CD8-positive, alpha-beta T cell (primary cell): ENCODE measurements at regions of chr10 and their contacts with region 1.

Region 1: GRCh38 chr10:63421591-63421990 is 44.2 kb downstream of the JMJD1C start:
- DNase-seq: peak in 4 of 9 experiments; percentile 7 to 72 (median 47)
- ATAC-seq: peak; percentile 97
- H3K4me3 ChIP-seq: no peak overlapping the region
- H3K4me3 Mint-ChIP-seq: peak overlapping the region; percentile 52
- H3K27ac ChIP-seq: peak overlapping the region; percentile 52 to 54
- H3K27ac Mint-ChIP-seq: peak overlapping the region; percentile 93
- H3K4me1 ChIP-seq: peaks cover 23% of the 10 kb centered on the region
- H3K4me1 Mint-ChIP-seq: peaks cover 56% of the 10 kb centered on the region
- H3K27me3 ChIP-seq: no peaks in the 10 kb centered on the region
- H3K27me3 Mint-ChIP-seq: no peaks in the 10 kb centered on the region
- CTCF ChIP-seq: no peak

Region 2: GRCh38 chr10:63355682-63356081 is 65.9 kb before region 1 on chr10:
- CTCF ChIA-PET with region 1: no interaction called
- POLR2A ChIA-PET with region 1: no interaction called
- intact Hi-C with region 1: loop called in 1 of 2 experiments (anchors 10 kb)
- DNase-seq: no peak
- ATAC-seq: no peak
- H3K4me3 ChIP-seq: no peak overlapping the region
- H3K4me3 Mint-ChIP-seq: no peak overlapping the region
- H3K27ac ChIP-seq: no peak overlapping the region
- H3K27ac Mint-ChIP-seq: no peak overlapping the region
- H3K4me1 ChIP-seq: no peaks in the 10 kb centered on the region
- H3K4me1 Mint-ChIP-seq: peaks cover 19% of the 10 kb centered on the region
- H3K27me3 ChIP-seq: no peaks in the 10 kb centered on the region
- H3K27me3 Mint-ChIP-seq: no peaks in the 10 kb centered on the region
- CTCF ChIP-seq: no peak

Region 3: GRCh38 chr10:63434866-63435854 is 13.6 kb after region 1 on chr10:
- CTCF ChIA-PET with region 1: no interaction called
- POLR2A ChIA-PET with region 1: interaction called, 4 read pairs
- intact Hi-C with region 1: loop called in 1 of 2 experiments (anchors 2 kb)
- DNase-seq: no peak
- ATAC-seq: no peak
- H3K4me3 ChIP-seq: no peak overlapping the region
- H3K4me3 Mint-ChIP-seq: no peak overlapping the region
- H3K27ac ChIP-seq: no peak overlapping the region
- H3K27ac Mint-ChIP-seq: no peak overlapping the region
- H3K4me1 ChIP-seq: no peaks in the 10 kb centered on the region
- H3K4me1 Mint-ChIP-seq: peaks cover 26% of the 10 kb centered on the region
- H3K27me3 ChIP-seq: no peaks in the 10 kb centered on the region
- H3K27me3 Mint-ChIP-seq: no peaks in the 10 kb centered on the region
- CTCF ChIP-seq: no peak

Region 4: GRCh38 chr10:63491588-63492316 is 70.2 kb after region 1 on chr10:
- CTCF ChIA-PET with region 1: no interaction called
- POLR2A ChIA-PET with region 1: no interaction called
- intact Hi-C with region 1: no loop called
- DNase-seq: no peak
- ATAC-seq: no peak
- H3K4me3 ChIP-seq: no peak overlapping the region
- H3K4me3 Mint-ChIP-seq: no peak overlapping the region
- H3K27ac ChIP-seq: no peak overlapping the region
- H3K27ac Mint-ChIP-seq: no peak overlapping the region
- H3K4me1 ChIP-seq: no peaks in the 10 kb centered on the region
- H3K4me1 Mint-ChIP-seq: peaks cover 19% of the 10 kb centered on the region
- H3K27me3 ChIP-seq: no peaks in the 10 kb centered on the region
- H3K27me3 Mint-ChIP-seq: no peaks in the 10 kb centered on the region
- CTCF ChIP-seq: no peak